ENCODE measurements at regions of chr5 and their contacts with region 1.

Region 1: GRCh38 chr5:14727428-14727865 is 62.9 kb downstream of the OTULIN start:
- DNase-seq: peak; percentile 47 to 89
- H3K4me3 ChIP-seq: peak overlapping the region in 1 of 4 experiments; percentile 26; a peak in 1 of 8 replicates
- H3K27ac ChIP-seq: no peak overlapping the region
- H3K4me1 ChIP-seq: peaks cover 8 to 22% (median 17%) of the 10 kb centered on the region in 4 experiments
- H3K27me3 ChIP-seq: 0 out of 7 replicates have a peak, but pooled peaks cover 0 to 2% (median 0%) of the 10 kb centered on the region in 4 experiments
- CTCF ChIP-seq: peak; percentile 81 to 83 (median 82)
- EP300 ChIP-seq: no peak
- POLR2A ChIP-seq: no peak
- RAD21 ChIP-seq: peak; percentile 97

Region 2: DNA sequence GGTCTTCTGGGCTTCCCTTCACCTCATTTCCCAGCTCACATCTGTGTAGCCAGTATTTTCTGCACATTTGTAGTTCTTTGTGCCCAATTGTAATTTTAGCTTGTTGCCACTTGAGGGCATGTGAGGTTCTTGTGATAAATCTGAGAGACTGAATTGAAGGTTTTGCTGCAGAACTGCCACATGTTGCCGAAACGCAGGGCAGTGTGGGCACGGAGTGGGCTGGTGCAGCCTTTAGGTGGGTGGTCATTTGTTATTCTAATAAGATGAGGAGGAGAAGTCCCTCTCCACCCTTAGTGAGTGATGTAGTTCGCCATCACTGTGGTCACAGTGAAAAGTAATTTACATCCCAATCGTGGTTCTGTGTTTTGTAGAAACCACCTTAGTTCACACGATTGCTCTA is 41.7 kb before region 1 on chr5:
- CTCF ChIA-PET with region 1: interaction called, 14 read pairs
- POLR2A ChIA-PET with region 1: no interaction called
- DNase-seq: no peak
- H3K4me3 ChIP-seq: no peak overlapping the region
- H3K27ac ChIP-seq: no peak overlapping the region
- H3K4me1 ChIP-seq: no peaks in the 10 kb centered on the region
- H3K27me3 ChIP-seq: no peaks in the 10 kb centered on the region
- CTCF ChIP-seq: peak in 2 of 3 experiments; percentile 73 to 74; a peak in 3 of 4 replicates
- EP300 ChIP-seq: no peak
- POLR2A ChIP-seq: no peak
- RAD21 ChIP-seq: peak; percentile 81 to 89

Region 3: GRCh38 chr5:14706615-14707021 is 20.8 kb before region 1 on chr5:
- CTCF ChIA-PET with region 1: interaction called, 31 read pairs
- POLR2A ChIA-PET with region 1: no interaction called
- DNase-seq: no peak
- H3K4me3 ChIP-seq: no peak overlapping the region
- H3K27ac ChIP-seq: no peak overlapping the region
- H3K4me1 ChIP-seq: no peaks in the 10 kb centered on the region
- H3K27me3 ChIP-seq: peaks cover 0 to 3% (median under 1%) of the 10 kb centered on the region in 4 experiments; a peak in 2 of 7 replicates
- CTCF ChIP-seq: no peak
- EP300 ChIP-seq: no peak
- POLR2A ChIP-seq: no peak
- RAD21 ChIP-seq: no peak

Region 4: DNA sequence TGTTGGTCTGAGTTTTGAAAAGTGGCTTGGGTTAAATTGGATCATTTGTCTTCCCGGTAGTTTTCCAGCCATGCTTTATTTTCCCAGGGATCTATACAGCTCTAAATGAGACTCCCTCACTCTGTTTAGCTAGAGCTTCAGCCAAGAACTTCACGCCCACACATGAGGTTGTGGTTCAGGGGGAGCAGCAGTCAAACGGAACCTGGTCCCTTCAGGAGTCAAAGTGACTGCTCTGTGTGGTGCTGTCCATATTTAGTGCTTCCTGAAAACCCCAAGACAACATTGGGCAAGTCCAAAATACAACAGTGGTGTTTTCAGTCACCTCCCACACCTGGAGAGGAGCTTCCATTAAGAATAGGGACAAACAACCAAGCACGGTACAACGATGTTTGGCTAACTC is 53.7 kb after region 1 on chr5:
- CTCF ChIA-PET with region 1: interaction called, 37 read pairs
- POLR2A ChIA-PET with region 1: no interaction called
- DNase-seq: no peak
- H3K4me3 ChIP-seq: no peak overlapping the region
- H3K27ac ChIP-seq: no peak overlapping the region
- H3K4me1 ChIP-seq: peaks cover 0 to 11% (median 0%) of the 10 kb centered on the region in 4 experiments; a peak in 2 of 7 replicates
- H3K27me3 ChIP-seq: no peaks in the 10 kb centered on the region
- CTCF ChIP-seq: no peak
- EP300 ChIP-seq: no peak
- POLR2A ChIP-seq: no peak
- RAD21 ChIP-seq: no peak

Region 5: GRCh38 chr5:15003511-15003920 is 276.1 kb after region 1 on chr5:
- CTCF ChIA-PET with region 1: interaction called, 93 read pairs
- POLR2A ChIA-PET with region 1: no interaction called
- DNase-seq: peak in 1 of 2 experiments; percentile 49
- H3K4me3 ChIP-seq: no peak overlapping the region
- H3K27ac ChIP-seq: no peak overlapping the region
- H3K4me1 ChIP-seq: no peaks in the 10 kb centered on the region
- H3K27me3 ChIP-seq: no peaks in the 10 kb centered on the region
- CTCF ChIP-seq: peak; percentile 46 to 78 (median 76)
- EP300 ChIP-seq: no peak
- POLR2A ChIP-seq: no peak
- RAD21 ChIP-seq: peak; percentile 88